ENCODE measurements at regions of chr4 and their contacts with region 1.

Region 1: DNA sequence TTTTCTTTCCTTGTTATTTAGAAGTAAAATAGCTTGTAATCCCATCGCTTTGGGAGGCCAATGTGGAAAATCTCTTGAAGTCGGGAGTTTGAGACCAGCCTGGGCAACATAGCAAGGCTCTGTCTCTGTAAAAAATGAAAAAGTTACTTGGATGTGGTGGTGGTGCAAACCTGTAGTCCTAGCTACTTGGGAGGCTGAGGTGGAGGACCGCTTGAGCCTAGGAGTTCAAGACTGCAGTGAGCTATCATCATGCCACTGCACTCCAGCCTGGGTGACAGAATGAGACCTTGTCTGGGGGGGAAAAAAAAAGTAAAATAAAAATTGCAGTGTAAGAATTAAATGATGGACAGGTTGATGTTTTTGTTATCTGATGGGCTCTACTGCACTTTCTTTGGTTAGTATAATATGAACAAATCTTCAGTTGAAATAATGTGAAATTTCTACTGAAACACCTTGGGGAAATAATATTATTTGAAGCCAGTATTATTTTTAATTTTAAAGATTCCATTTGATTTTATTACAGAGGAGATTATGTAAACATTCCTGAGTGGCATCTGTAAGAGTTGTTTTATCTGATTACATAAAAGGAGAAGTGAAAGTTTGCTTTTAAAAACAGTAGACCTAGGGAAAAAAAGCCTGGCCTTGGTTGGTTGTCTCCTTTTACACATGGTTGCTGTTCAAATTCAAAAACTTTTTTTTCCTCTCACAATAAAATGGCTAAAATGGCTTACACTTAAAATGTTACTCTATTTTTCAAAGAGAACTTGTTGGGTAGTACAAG is 10.5 kb upstream of the NDUFC1 start:
- DNase-seq: no peak
- H3K27ac ChIP-seq: 0 out of 2 replicates have a peak overlapping the region, but pooled peaks have one; percentile 34
- CTCF ChIP-seq: no peak

Region 2: DNA sequence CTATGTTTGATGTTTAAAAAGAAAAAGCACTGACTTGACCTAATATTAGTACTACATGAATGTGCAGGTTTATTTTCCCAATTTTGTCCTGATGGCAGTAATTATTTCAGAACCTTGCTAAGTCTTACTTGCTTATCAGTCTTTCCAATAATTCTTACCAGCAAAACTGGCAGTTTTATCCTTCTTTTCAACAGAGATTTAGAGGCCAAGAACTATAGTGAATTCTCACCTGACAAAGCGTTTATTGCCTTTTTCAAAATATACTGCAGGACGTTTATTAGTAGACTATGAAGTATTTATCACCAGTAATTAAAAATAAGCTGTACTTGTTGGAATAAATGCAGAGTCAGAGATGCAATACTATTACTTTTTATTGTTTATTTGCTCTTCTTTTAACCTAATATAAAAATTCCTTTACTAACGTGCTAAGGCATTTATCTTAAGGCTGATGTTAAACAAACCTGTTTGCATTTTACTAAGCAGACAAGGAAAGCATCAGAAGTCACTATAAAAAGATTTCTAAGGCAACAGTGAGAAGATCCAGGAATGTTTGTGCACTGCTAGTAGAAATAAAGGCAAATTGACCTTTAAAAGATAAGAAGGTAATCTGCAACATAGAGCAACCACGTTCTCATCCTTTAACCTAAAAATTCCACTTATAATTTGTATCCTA is 377.5 kb before region 1 on chr4:
- CTCF ChIA-PET with region 1: no interaction called
- POLR2A ChIA-PET with region 1: no interaction called
- DNase-seq: no peak
- H3K27ac ChIP-seq: no peak overlapping the region
- CTCF ChIP-seq: no peak

Region 3: GRCh38 chr4:139144161-139144859 is 168.4 kb before region 1 on chr4:
- CTCF ChIA-PET with region 1: interaction called, 3 read pairs
- POLR2A ChIA-PET with region 1: interaction called, 10 read pairs
- DNase-seq: peak; percentile 13
- H3K27ac ChIP-seq: no peak overlapping the region
- CTCF ChIP-seq: no peak

Region 4: GRCh38 chr4:139279760-139280620 is 32.8 kb before region 1 on chr4 and contains the start of gene MGARP:
- CTCF ChIA-PET with region 1: no interaction called
- POLR2A ChIA-PET with region 1: no interaction called
- DNase-seq: no peak
- H3K27ac ChIP-seq: no peak within 1 kb of the TSS
- CTCF ChIP-seq: no peak

Measured in RWPE1 (cell line).